Psoas muscle (tissue), 8 donors: ENCODE measurements at regions of chr12 and their contacts with region 1.

Region 1: DNA sequence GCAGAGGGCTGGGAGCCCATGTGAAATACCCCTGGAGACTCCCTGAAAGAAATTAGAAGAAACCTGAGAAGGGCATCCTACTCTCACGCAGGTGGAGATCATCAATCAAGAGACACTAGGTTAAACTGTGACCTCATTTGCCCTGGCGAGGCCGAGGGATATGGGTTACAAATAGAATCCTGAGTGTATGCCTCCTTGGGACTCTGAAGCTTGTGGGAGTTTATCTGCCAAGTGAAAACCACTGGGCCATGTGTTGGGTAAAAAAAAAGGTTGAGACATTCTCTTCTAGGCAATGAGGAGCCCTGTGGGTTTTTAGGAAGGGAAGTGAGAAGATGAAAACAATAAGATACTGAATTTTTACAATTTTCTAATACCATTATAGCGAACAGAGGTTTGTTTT is 160.7 kb upstream of the ARID2 start:
- DNase-seq: no peak
- ATAC-seq: peak; percentile 75 to 98 (median 90)
- H3K4me3 ChIP-seq: no peak overlapping the region
- H3K27ac ChIP-seq: peak overlapping the region; percentile 56
- H3K4me1 ChIP-seq: peaks cover 16% of the 10 kb centered on the region
- H3K27me3 ChIP-seq: no peaks in the 10 kb centered on the region
- CTCF ChIP-seq: no peak

Region 2: DNA sequence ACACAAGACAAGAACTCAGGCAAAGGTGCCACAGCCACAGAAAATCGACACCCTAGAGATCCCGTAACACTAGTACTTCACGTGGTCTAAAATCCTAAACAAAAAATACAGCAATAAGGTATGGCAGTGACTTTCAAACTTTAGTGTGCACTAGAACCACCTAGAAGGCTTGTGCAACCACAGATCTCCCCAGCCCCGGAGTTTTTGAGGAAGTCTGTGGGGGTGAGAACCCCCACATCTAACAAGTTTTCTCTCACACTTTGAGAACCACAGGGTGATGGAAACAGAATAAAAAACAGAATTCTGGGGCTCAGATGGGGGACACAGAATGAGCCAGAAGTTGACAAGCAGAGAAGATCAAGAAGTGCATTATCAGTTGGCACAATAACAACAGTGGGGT is 98.9 kb before region 1 on chr12:
- intact Hi-C with region 1: no loop called
- DNase-seq: no peak
- ATAC-seq: no peak
- H3K4me3 ChIP-seq: no peak overlapping the region
- H3K27ac ChIP-seq: no peak overlapping the region
- H3K4me1 ChIP-seq: no peaks in the 10 kb centered on the region
- H3K27me3 ChIP-seq: no peaks in the 10 kb centered on the region
- CTCF ChIP-seq: no peak

Region 3: GRCh38 chr12:45615268-45615667 is 46.5 kb after region 1 on chr12:
- intact Hi-C with region 1: loop called in 1 of 2 experiments (anchors 5 kb)
- DNase-seq: no peak
- ATAC-seq: peak; percentile 95 to 97 (median 96)
- H3K4me3 ChIP-seq: no peak overlapping the region
- H3K27ac ChIP-seq: peak overlapping the region; percentile 5
- H3K4me1 ChIP-seq: peaks cover 13% of the 10 kb centered on the region
- H3K27me3 ChIP-seq: no peaks in the 10 kb centered on the region
- CTCF ChIP-seq: no peak